Activated CD4-positive, alpha-beta memory T cell treated with anti-CD3 and anti-CD28 coated beads for 36 hours (primary cell): ENCODE measurements at regions of chr1 and their contacts with region 1.

Region 1: GRCh38 chr1:151459331-151460046 is at the start of gene POGZ:
- DNase-seq: peak; percentile 96
- H3K4me3 Mint-ChIP-seq: peak within 1 kb of the TSS; percentile 85
- H3K27ac Mint-ChIP-seq: peak within 1 kb of the TSS; percentile 91
- H3K4me1 Mint-ChIP-seq: peaks cover 20% of the 10 kb centered on the region
- H3K27me3 Mint-ChIP-seq: peaks cover 16% of the 10 kb centered on the region
- total RNA-seq, gene POGZ: 73.7 to 76.3 TPM

Region 2: GRCh38 chr1:151472856-151473731 is 13.6 kb after region 1 on chr1:
- CTCF ChIA-PET with region 1: interaction called, 7 read pairs
- POLR2A ChIA-PET with region 1: interaction called, 19 read pairs
- intact Hi-C with region 1: loop called (anchors 1 kb)
- DNase-seq: peak; percentile 62
- H3K4me3 Mint-ChIP-seq: peak overlapping the region; percentile 64
- H3K27ac Mint-ChIP-seq: peak overlapping the region; percentile 53
- H3K4me1 Mint-ChIP-seq: peaks cover 26% of the 10 kb centered on the region
- H3K27me3 Mint-ChIP-seq: peaks cover 3% of the 10 kb centered on the region

Region 3: DNA sequence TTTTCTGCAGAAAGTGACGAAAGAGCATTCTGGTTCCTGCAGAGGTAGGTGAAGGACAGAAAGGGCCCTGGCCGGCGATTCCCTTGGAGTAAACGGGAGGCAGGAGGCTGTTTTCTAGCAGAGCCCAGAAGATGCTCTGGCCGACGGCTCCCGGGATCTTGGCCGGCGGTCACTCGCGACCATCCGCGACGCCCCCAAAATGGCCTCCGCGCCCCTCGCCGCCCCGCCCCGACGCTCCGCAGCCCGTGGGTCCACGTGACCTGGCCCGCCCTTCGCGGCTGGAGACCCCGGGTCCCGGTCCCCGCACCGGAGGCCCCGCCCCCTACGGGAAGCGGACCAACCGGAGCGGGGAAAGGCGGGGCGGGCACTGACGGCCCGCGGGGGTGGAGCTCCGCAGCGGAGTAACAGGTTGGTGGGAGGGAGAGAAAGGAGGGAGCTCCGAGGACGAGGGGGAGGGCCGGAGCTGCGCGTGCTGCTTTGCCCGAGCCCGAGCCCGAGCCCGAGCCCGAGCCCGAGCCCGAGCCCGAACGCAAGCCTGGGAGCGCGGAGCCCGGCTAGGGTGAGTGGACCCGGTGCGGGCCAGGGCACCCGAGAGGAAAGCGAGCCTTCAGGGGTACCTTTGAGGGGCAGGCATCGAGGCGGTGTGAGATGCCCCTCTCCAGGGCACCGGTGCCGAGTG is 51.6 kb after region 1 on chr1 and contains the start of gene CGN:
- CTCF ChIA-PET with region 1: no interaction called
- POLR2A ChIA-PET with region 1: interaction called, 6 read pairs
- intact Hi-C with region 1: loop called (anchors 2 kb)
- DNase-seq: peak; percentile 90
- H3K4me3 Mint-ChIP-seq: peak within 1 kb of the TSS; percentile 80
- H3K27ac Mint-ChIP-seq: no peak within 1 kb of the TSS
- H3K4me1 Mint-ChIP-seq: peaks cover 20% of the 10 kb centered on the region
- H3K27me3 Mint-ChIP-seq: no peaks in the 10 kb centered on the region
- total RNA-seq, gene CGN: 1.3 to 1.4 TPM

Region 4: DNA sequence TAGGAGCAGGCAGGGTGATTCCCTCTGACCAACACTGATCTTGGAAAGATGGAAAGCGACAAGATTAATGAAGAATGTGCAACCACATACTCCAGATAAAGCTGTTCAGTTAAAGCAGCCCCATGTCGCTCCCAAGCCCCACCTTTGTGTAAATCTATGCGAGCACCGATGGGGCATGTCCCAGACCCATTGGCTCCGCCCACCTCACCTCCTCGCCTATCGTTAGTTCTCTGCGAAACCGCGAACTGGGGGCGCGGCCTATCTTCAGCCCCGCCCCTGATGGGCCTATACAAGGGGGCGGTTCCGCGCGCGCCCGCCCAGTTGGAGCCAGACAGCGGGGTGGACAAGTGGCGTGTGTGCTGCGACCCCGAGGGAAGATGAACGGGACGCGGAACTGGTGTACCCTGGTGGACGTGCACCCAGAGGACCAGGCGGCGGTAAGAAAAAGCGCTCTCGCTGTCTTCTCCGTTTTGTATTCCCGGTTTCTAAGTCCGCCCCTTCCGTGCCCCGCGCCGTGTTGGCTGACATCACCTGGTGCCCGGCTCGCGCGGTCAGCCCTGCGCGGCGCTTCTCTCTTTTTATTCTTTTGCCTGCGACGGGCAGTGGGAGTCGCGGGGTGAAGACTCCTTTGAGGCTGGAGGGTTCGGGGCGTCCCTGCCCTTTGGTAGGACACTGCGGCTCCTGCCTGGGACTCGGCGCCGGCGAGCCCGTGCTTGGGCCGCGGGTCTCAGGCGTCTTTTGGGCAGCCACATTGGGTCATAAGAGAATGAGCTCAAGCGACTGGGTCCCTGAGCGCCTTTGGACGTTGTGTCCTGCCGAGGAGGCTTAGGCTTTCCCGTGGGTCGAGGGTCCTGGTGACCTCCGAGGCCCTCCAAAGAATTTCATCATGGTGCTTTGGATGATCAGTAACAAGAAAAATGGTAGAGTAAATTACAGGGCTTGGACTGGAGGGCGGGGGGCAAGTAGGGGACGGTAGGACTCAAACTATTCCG is 80.8 kb after region 1 on chr1 and contains the start of gene TUFT1:
- CTCF ChIA-PET with region 1: no interaction called
- POLR2A ChIA-PET with region 1: no interaction called
- intact Hi-C with region 1: loop called (anchors 1 kb)
- DNase-seq: peak; percentile 95
- H3K4me3 Mint-ChIP-seq: peak within 1 kb of the TSS; percentile 85
- H3K27ac Mint-ChIP-seq: no peak within 1 kb of the TSS
- H3K4me1 Mint-ChIP-seq: peaks cover 19% of the 10 kb centered on the region
- H3K27me3 Mint-ChIP-seq: no peaks in the 10 kb centered on the region
- total RNA-seq, gene TUFT1: 3.0 to 4.1 TPM